ENCODE measurements at regions of chr14 and their contacts with region 1.

Region 1: DNA sequence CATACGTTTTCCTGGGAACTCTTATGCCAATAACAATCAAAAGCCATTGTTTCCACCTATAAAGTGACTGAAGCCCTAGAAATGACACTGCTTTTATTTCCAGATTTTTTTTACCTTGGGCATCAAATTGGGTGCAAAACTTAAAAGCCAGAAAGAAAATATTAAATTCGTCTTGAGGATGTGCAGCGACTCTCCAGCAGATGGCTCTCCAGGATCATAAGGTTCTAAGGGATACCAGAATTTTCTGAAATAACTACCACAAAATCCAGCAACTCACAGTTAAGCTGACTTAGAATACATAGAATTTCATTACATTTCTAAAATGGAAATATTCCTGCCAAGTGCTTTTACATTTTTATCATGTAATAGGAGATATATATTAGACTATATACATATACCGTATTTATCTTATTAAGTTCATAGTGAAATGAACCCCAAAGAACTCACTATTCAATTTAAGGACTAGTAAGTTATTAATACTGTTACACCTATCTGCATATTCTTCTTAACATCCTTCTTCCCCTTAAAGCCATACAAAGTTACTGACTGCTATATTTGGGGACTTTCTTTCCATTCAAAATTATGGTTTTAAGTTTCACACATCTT is 44.0 kb downstream of the ARMH4 start:
- DNase-seq: peak; percentile 65
- H3K4me3 Mint-ChIP-seq: no peak overlapping the region
- H3K27ac Mint-ChIP-seq: no peak overlapping the region
- H3K4me1 Mint-ChIP-seq: peaks cover 5% of the 10 kb centered on the region
- H3K27me3 Mint-ChIP-seq: peaks cover 7% of the 10 kb centered on the region

Region 2: DNA sequence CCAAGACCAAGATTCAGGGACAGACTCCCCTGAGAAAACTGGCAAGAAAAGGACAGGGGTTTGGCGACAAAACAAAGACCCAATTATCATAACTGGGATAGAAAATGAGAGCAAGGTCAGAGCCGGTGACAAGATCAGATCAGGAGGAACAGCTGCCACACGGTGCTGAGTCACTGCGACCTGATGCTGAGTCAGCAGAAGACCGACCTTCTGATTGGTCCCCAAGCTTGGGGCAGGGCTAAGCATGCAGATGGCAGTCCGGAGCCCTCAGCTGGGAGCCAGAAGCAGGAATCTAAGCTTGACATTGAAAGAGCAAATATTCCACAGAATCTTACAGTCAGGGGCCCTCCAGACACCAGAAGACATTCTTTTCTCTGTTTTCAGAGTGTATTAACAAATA is 63.0 kb after region 1 on chr14:
- CTCF ChIA-PET with region 1: interaction called, 47 read pairs
- intact Hi-C with region 1: loop called (anchors 1 kb)
- DNase-seq: peak; percentile 71
- H3K4me3 Mint-ChIP-seq: no peak overlapping the region
- H3K27ac Mint-ChIP-seq: no peak overlapping the region
- H3K4me1 Mint-ChIP-seq: peaks cover 6% of the 10 kb centered on the region
- H3K27me3 Mint-ChIP-seq: peaks cover 3% of the 10 kb centered on the region

Region 3: GRCh38 chr14:58239244-58240195 is 131.5 kb after region 1 on chr14:
- CTCF ChIA-PET with region 1: no interaction called
- intact Hi-C with region 1: no loop called
- DNase-seq: peak; percentile 88
- H3K4me3 Mint-ChIP-seq: no peak overlapping the region
- H3K27ac Mint-ChIP-seq: no peak overlapping the region
- H3K4me1 Mint-ChIP-seq: peaks cover 22% of the 10 kb centered on the region
- H3K27me3 Mint-ChIP-seq: no peaks in the 10 kb centered on the region

Region 4: DNA sequence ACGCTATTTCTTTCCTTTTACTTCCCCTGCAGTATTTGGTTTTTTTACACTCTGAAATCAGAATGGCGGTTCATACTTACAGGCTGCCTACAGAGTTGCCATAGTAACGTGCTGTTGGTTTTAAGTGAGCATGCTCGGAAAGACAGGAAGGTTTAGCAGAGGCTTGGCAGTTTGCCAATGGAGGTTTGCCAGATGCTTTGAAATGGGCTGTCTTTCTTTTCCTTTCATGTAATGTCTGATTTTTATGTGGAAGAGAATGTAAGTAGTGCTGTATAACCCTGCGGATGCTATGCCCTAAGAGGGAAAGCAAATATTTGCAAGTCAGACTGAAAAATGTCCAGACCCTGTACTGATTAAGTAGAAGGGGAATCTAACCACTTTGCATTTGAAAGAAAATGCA is 223.1 kb after region 1 on chr14:
- CTCF ChIA-PET with region 1: no interaction called
- intact Hi-C with region 1: loop called (anchors 1 kb)
- DNase-seq: peak; percentile 95
- H3K4me3 Mint-ChIP-seq: peak overlapping the region; percentile 73
- H3K27ac Mint-ChIP-seq: peak overlapping the region; percentile 83
- H3K4me1 Mint-ChIP-seq: peaks cover 20% of the 10 kb centered on the region
- H3K27me3 Mint-ChIP-seq: no peaks in the 10 kb centered on the region

Region 5: GRCh38 chr14:58395812-58396788 is 288.1 kb after region 1 on chr14 and contains the start of gene TOMM20L:
- CTCF ChIA-PET with region 1: interaction called, 9 read pairs
- intact Hi-C with region 1: loop called (anchors 1 kb)
- DNase-seq: peak; percentile 71
- H3K4me3 Mint-ChIP-seq: peak within 1 kb of the TSS; percentile 67
- H3K27ac Mint-ChIP-seq: no peak within 1 kb of the TSS
- H3K4me1 Mint-ChIP-seq: peaks cover 8% of the 10 kb centered on the region
- H3K27me3 Mint-ChIP-seq: no peaks in the 10 kb centered on the region
- total RNA-seq, gene TOMM20L: not detected

Region 6: DNA sequence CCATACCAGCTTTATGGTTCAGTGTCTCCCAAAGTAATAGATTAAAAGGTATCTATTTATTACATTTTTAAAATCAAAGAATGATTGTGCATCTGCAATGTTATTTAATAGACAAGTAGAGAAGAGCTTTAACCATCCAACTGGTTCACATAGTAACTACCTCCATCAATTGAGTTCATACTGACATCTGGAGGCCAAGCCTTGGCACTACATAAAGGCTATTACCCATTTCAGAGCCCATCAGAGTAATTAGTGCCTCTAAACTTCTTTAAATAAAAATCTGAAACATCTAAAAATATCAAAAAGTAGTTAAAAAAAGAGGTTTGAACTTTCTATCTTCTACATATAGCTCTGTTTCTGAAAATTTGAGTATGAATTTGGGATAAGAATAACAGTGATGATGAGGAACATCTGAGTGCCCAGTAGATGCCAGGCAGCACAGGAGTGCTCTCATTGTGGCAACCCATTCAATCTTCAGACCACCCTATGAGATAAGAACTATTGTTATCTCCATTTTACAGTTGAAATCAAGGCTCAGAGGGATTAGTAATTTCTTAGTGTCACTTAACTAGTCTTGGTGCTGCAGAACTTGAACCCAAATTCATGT is 947.5 kb after region 1 on chr14:
- CTCF ChIA-PET with region 1: interaction called, 3 read pairs
- intact Hi-C with region 1: loop called (anchors 1 kb)
- DNase-seq: peak; percentile 54
- H3K4me3 Mint-ChIP-seq: no peak overlapping the region
- H3K27ac Mint-ChIP-seq: no peak overlapping the region
- H3K4me1 Mint-ChIP-seq: no peaks in the 10 kb centered on the region
- H3K27me3 Mint-ChIP-seq: peaks cover 4% of the 10 kb centered on the region